Activated CD4-positive, alpha-beta T cell treated with anti-CD3 and anti-CD28 coated beads for 36 hours (primary cell): ENCODE measurements at regions of chr11 and their contacts with region 1.

Region 1: GRCh38 chr11:86193297-86194095 is 51.1 kb upstream of the EED start:
- DNase-seq: peak; percentile 74
- ATAC-seq: peak; percentile 99
- H3K4me3 Mint-ChIP-seq: peak overlapping the region; percentile 53
- H3K27ac Mint-ChIP-seq: peak overlapping the region; percentile 82
- H3K4me1 Mint-ChIP-seq: peaks cover 27% of the 10 kb centered on the region
- H3K27me3 Mint-ChIP-seq: peaks cover 6% of the 10 kb centered on the region

Region 2: DNA sequence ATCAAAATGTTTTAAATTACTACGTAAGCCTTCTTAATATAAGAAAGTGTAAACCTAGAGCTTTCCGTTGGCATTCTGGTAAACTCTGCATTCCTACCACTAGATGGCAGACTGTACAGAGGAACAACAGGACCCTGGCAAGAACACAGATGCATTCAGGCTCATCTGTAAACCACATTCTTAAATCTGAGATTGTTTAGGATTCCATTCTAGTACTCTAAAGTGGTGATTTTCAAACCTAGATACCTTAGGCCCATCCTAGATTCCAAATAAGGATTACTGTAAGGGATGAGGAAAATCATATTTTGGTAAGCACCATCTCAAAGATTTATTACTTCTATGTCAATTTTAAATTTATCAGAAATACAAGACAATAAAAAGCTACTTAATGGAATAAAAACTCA is 151.5 kb before region 1 on chr11:
- CTCF ChIA-PET with region 1: interaction called, 57 read pairs
- POLR2A ChIA-PET with region 1: interaction called, 3 read pairs
- intact Hi-C with region 1: loop called (anchors 1 kb)
- DNase-seq: peak; percentile 63
- ATAC-seq: peak; percentile 70
- H3K4me3 Mint-ChIP-seq: peak overlapping the region; percentile 20
- H3K27ac Mint-ChIP-seq: peak overlapping the region; percentile 68
- H3K4me1 Mint-ChIP-seq: peaks cover 71% of the 10 kb centered on the region
- H3K27me3 Mint-ChIP-seq: no peaks in the 10 kb centered on the region

Region 3: GRCh38 chr11:86174101-86175046 is 19.1 kb before region 1 on chr11:
- CTCF ChIA-PET with region 1: interaction called, 12 read pairs
- POLR2A ChIA-PET with region 1: interaction called, 4 read pairs
- intact Hi-C with region 1: loop called in 1 of 2 experiments (anchors 1 kb)
- DNase-seq: peak; percentile 30
- ATAC-seq: peak; percentile 18
- H3K4me3 Mint-ChIP-seq: no peak overlapping the region
- H3K27ac Mint-ChIP-seq: no peak overlapping the region
- H3K4me1 Mint-ChIP-seq: peaks cover 31% of the 10 kb centered on the region
- H3K27me3 Mint-ChIP-seq: no peaks in the 10 kb centered on the region

Region 4: GRCh38 chr11:86182976-86183584 is 10.4 kb before region 1 on chr11:
- CTCF ChIA-PET with region 1: interaction called, 18 read pairs
- POLR2A ChIA-PET with region 1: interaction called, 4 read pairs
- intact Hi-C with region 1: no loop called
- DNase-seq: peak; percentile 89
- ATAC-seq: peak; percentile 84
- H3K4me3 Mint-ChIP-seq: no peak overlapping the region
- H3K27ac Mint-ChIP-seq: no peak overlapping the region
- H3K4me1 Mint-ChIP-seq: peaks cover 6% of the 10 kb centered on the region
- H3K27me3 Mint-ChIP-seq: no peaks in the 10 kb centered on the region

Region 5: GRCh38 chr11:86341382-86341781 is 147.9 kb after region 1 on chr11:
- CTCF ChIA-PET with region 1: no interaction called
- POLR2A ChIA-PET with region 1: no interaction called
- intact Hi-C with region 1: no loop called
- DNase-seq: no peak
- ATAC-seq: no peak
- H3K4me3 Mint-ChIP-seq: no peak overlapping the region
- H3K27ac Mint-ChIP-seq: no peak overlapping the region
- H3K4me1 Mint-ChIP-seq: peaks cover 17% of the 10 kb centered on the region
- H3K27me3 Mint-ChIP-seq: no peaks in the 10 kb centered on the region

Region 6: DNA sequence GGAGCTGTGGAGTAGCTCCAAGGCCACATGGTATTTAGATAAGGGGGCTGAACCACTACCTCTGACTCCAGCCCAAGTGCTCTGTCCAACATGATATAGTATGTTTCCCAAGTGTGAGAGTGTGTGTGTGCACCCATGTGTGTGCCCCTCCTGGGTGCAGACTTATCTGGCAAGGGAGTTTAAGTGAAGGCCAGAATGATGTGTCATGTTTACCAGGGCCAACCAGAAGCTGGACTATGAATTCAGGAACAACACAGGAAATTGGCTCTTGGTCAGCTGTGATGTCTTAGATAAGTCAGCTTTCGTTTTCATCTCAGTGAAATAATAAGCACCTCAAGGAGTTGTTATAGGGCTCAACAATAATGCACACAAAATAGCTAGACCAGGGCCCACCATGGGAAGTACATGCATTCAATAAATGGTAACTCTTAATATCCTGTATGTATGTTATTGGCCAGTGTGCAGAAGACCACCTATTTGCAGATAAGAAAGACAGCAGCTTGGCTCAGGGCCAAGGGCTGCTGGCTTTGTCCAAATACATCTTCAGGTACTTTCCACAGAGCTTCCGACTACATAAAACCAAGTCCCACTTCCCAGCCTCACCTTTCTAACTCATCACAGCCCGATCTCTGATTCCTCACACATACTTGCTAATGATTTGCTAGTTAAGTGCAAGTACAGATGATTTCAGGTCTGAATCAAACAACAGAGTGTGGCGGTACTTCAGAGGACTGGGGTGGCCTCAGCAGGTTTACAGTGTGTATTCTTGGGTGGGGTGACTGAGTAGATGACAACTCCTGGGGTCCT is 358.0 kb after region 1 on chr11:
- CTCF ChIA-PET with region 1: no interaction called
- POLR2A ChIA-PET with region 1: no interaction called
- intact Hi-C with region 1: no loop called
- DNase-seq: no peak
- ATAC-seq: no peak
- H3K4me3 Mint-ChIP-seq: no peak overlapping the region
- H3K27ac Mint-ChIP-seq: no peak overlapping the region
- H3K4me1 Mint-ChIP-seq: no peaks in the 10 kb centered on the region
- H3K27me3 Mint-ChIP-seq: no peaks in the 10 kb centered on the region